OCI-LY7 (cell line): ENCODE measurements at regions of chr3 and their contacts with region 1.

Region 1: GRCh38 chr3:72163809-72164634 is 379.1 kb upstream of the PROK2 start:
- DNase-seq: peak; percentile 99
- H3K4me3 ChIP-seq: peak overlapping the region; percentile 45
- H3K27ac ChIP-seq: peak overlapping the region; percentile 90
- H3K4me1 ChIP-seq: peaks cover 52% of the 10 kb centered on the region
- CTCF ChIP-seq: no peak

Region 2: DNA sequence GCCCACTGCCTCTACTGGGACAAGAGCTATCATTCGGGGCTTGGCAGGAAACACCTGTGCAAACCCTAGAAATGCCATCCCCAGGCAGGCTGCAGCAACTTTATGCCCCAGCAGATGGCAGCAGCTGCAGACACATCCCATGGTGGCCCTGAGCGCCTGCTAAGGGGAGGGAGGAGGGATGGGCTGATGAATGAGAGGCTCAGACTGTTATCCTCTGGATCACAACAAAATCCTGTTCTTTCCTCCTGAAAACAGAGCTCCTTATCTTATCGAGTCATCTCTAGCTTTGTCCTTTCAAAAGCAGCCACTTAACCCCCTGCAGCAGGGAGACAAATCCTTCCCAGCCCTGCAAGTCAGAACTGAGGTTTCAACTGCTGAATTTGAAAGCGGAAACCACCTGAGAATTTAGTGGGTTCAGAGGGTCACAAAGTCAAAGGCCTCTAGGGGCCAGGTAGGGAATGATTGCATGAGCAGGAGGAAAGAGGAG is 288.5 kb before region 1 on chr3:
- CTCF ChIA-PET with region 1: no interaction called
- POLR2A ChIA-PET with region 1: no interaction called
- intact Hi-C with region 1: loop called (anchors 5 kb)
- DNase-seq: peak; percentile 82
- H3K4me3 ChIP-seq: no peak overlapping the region
- H3K27ac ChIP-seq: no peak overlapping the region
- H3K4me1 ChIP-seq: peaks cover 4% of the 10 kb centered on the region
- CTCF ChIP-seq: peak; percentile 93

Region 3: DNA sequence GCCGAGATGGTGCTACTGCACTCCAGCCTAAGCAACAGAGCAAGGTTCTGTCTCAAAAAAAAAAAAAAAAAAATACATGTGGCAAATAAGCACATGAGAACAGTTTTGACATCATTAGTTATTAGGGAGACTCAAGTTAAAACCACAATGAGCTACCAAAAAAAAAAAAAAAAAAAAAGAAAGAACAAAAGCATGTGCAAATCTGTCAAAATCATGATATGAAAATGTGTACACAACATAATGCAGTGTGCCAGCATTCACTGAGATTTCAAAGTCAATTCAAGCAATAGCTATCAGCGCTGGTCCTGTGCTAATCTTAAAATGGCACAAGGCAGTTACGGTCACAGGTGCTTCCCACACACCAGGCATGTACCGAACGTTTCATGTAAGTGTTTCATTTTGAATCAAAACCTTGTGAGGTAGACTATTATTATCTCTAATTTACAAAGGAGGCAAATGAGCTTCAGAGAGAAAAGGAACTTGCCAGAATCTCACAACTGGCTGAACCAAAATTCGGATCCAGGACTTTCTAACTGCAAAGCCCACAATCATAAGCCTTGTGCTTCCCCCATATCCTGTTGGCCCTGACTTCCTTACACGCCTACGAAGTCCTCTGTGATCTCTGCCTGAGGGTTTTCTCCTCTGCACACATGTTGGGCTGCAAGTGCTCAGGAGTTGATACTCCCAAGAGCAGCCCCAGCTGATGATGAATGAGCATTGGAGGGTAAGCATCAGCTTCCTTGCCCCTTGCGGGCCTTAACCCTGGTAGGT is 179.0 kb before region 1 on chr3:
- CTCF ChIA-PET with region 1: no interaction called
- POLR2A ChIA-PET with region 1: interaction called, 8 read pairs
- intact Hi-C with region 1: loop called (anchors 1 kb)
- DNase-seq: peak; percentile 87
- H3K4me3 ChIP-seq: peak overlapping the region; percentile 15
- H3K27ac ChIP-seq: peak overlapping the region; percentile 94
- H3K4me1 ChIP-seq: peaks cover 54% of the 10 kb centered on the region
- CTCF ChIP-seq: no peak

Region 4: GRCh38 chr3:72100601-72101187 is 63.3 kb before region 1 on chr3:
- CTCF ChIA-PET with region 1: interaction called, 4 read pairs
- POLR2A ChIA-PET with region 1: interaction called, 7 read pairs
- intact Hi-C with region 1: loop called (anchors 1 kb)
- DNase-seq: peak; percentile 79
- H3K4me3 ChIP-seq: peak overlapping the region; percentile 62
- H3K27ac ChIP-seq: peak overlapping the region; percentile 43
- H3K4me1 ChIP-seq: peaks cover 75% of the 10 kb centered on the region
- CTCF ChIP-seq: no peak

Region 5: GRCh38 chr3:72310419-72311380 is 146.7 kb after region 1 on chr3:
- CTCF ChIA-PET with region 1: no interaction called
- POLR2A ChIA-PET with region 1: no interaction called
- intact Hi-C with region 1: loop called (anchors 1 kb)
- DNase-seq: peak; percentile 79
- H3K4me3 ChIP-seq: peak overlapping the region; percentile 28
- H3K27ac ChIP-seq: peak overlapping the region; percentile 73
- H3K4me1 ChIP-seq: peaks cover 26% of the 10 kb centered on the region
- CTCF ChIP-seq: no peak

Region 6: GRCh38 chr3:72756900-72757299 is 592.9 kb after region 1 on chr3:
- CTCF ChIA-PET with region 1: no interaction called
- POLR2A ChIA-PET with region 1: no interaction called
- intact Hi-C with region 1: loop called (anchors 5 kb)
- DNase-seq: peak; percentile 95
- H3K4me3 ChIP-seq: peak overlapping the region; percentile 56
- H3K27ac ChIP-seq: peak overlapping the region; percentile 75
- H3K4me1 ChIP-seq: peaks cover 61% of the 10 kb centered on the region
- CTCF ChIP-seq: no peak